Naive thymus-derived CD4-positive, alpha-beta T cell (primary cell): ENCODE measurements at regions of chr22 and their contacts with region 1.

Region 1: GRCh38 chr22:39117585-39118191 is 20.6 kb downstream of the APOBEC3H start:
- DNase-seq: peak in 8 of 9 donors; percentile 46 to 69 (median 62)
- ATAC-seq: peak; percentile 77
- H3K4me3 ChIP-seq: no peak overlapping the region
- H3K4me3 Mint-ChIP-seq: peak overlapping the region in 2 of 10 donors; percentile 40 to 47
- H3K27ac ChIP-seq: no peak overlapping the region
- H3K27ac Mint-ChIP-seq: peak overlapping the region in 5 of 9 donors; percentile 3 to 73 (median 59)
- H3K4me1 ChIP-seq: peaks cover 6 to 28% of the 10 kb centered on the region in 2 donors
- H3K4me1 Mint-ChIP-seq: peaks cover 7 to 42% (median 18%) of the 10 kb centered on the region in 7 donors
- H3K27me3 ChIP-seq: no peaks in the 10 kb centered on the region
- H3K27me3 Mint-ChIP-seq: no peaks in the 10 kb centered on the region

Region 2: DNA sequence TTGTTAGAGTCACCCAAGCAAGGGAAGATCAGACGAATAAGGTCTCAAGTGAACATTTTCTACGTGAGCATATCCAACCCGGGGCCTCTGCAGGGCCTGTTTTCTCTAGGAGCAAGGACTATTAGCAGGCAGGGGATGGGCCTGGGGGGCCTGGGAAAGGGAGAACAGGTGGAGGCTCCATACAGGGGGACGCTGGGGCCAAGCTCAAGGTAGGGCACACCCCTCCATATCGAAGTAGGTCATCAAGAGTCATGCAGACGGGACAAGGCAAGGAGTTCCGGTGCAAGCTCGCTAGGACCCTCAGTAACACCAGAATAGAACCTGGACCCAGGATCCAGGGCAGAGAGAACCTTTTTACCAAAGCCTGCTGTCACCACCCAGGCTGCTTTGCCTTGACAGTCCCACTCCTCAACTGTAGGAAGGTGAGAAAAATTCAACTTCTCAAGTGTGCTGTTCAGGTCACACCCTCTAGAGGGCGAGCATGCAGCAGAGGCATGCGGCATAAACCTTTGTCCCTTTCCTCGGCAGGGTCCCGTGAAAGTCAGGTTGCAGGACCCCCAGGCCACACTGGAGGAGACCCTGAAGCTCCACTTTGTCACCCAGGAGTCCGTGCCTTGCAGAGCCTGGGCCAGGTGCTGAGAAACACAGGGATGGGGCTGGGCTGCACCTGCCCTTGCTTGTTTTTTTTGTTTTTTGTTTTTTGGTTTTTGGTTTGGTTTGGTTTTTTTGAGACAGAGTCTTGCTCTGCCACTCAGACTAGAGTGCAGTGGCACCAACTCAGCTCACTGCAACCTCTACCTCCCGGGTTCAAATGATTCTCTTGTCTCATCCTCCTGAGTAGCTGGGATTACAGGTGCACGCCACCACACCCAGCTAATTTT is 144.2 kb before region 1 on chr22:
- CTCF ChIA-PET with region 1: no interaction called
- POLR2A ChIA-PET with region 1: no interaction called
- intact Hi-C with region 1: loop called in 1 of 2 experiments (anchors 1 kb)
- DNase-seq: peak in 7 of 9 donors; percentile 20 to 54 (median 42)
- ATAC-seq: peak; percentile 86
- H3K4me3 ChIP-seq: no peak overlapping the region
- H3K4me3 Mint-ChIP-seq: no peak overlapping the region
- H3K27ac ChIP-seq: no peak overlapping the region
- H3K27ac Mint-ChIP-seq: peak overlapping the region in 1 of 9 donors; percentile 46
- H3K4me1 ChIP-seq: no peaks in the 10 kb centered on the region
- H3K4me1 Mint-ChIP-seq: peaks cover 0 to 22% (median 0%) of the 10 kb centered on the region in 7 donors
- H3K27me3 ChIP-seq: no peaks in the 10 kb centered on the region
- H3K27me3 Mint-ChIP-seq: peaks cover 0 to 21% (median 11%) of the 10 kb centered on the region in 5 donors

Region 3: GRCh38 chr22:39013942-39014722 is 103.6 kb before region 1 on chr22 and contains the start of gene APOBEC3C:
- CTCF ChIA-PET with region 1: interaction called, 3 read pairs
- POLR2A ChIA-PET with region 1: no interaction called
- intact Hi-C with region 1: loop called (anchors 2 kb)
- DNase-seq: peak; percentile 28 to 78 (median 59)
- ATAC-seq: peak; percentile 95
- H3K4me3 ChIP-seq: peak within 1 kb of the TSS; percentile 81
- H3K4me3 Mint-ChIP-seq: peak within 1 kb of the TSS; percentile 88 to 99 (median 94)
- H3K27ac ChIP-seq: peak within 1 kb of the TSS; percentile 87
- H3K27ac Mint-ChIP-seq: peak within 1 kb of the TSS; percentile 82 to 98 (median 95)
- H3K4me1 ChIP-seq: peaks cover 9 to 10% of the 10 kb centered on the region in 2 donors
- H3K4me1 Mint-ChIP-seq: peaks cover 12 to 51% (median 37%) of the 10 kb centered on the region in 7 donors
- H3K27me3 ChIP-seq: no peaks in the 10 kb centered on the region
- H3K27me3 Mint-ChIP-seq: no peaks in the 10 kb centered on the region
- total RNA-seq, gene APOBEC3C: 16.4 to 102 (median 20.5) TPM